ENCODE measurements at regions of chr7 and their contacts with region 1.

Region 1: GRCh38 chr7:2886900-2887299 is 42.8 kb upstream of the GNA12 start:
- DNase-seq: peak; percentile 44
- H3K4me3 Mint-ChIP-seq: no peak overlapping the region
- H3K27ac Mint-ChIP-seq: no peak overlapping the region
- H3K4me1 Mint-ChIP-seq: peaks cover 3% of the 10 kb centered on the region
- H3K27me3 Mint-ChIP-seq: peaks cover 1% of the 10 kb centered on the region

Region 2: DNA sequence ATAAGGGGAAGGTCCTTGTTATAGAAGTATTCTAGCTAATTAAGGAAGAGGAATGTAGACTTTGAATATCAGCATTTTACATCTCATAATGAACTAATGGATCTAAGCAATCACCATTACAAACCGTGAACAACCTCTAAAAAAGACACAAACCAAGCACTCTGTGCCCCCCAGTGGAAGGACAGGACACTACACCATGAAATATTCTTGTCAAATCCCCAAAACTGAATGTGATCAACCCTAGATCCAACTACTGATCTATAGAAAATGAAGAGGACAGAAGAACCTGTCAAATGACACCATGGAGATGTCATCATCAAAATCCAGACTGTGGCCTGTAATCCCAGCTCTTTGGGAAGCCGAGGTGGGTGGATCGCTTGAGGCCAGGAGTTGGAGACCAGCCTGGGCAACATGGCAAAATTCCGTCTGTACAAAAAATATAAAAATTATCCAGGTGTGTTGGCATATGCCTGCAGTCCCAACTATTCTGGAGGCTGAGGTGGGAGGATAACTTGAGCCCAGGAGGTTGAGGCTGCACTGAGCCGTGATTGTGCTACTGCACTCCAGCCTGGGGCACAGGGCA is 268.1 kb after region 1 on chr7:
- intact Hi-C with region 1: loop called (anchors 1 kb)
- DNase-seq: peak; percentile 48
- H3K4me3 Mint-ChIP-seq: no peak overlapping the region
- H3K27ac Mint-ChIP-seq: no peak overlapping the region
- H3K4me1 Mint-ChIP-seq: peaks cover 8% of the 10 kb centered on the region
- H3K27me3 Mint-ChIP-seq: peaks cover 11% of the 10 kb centered on the region

Region 3: DNA sequence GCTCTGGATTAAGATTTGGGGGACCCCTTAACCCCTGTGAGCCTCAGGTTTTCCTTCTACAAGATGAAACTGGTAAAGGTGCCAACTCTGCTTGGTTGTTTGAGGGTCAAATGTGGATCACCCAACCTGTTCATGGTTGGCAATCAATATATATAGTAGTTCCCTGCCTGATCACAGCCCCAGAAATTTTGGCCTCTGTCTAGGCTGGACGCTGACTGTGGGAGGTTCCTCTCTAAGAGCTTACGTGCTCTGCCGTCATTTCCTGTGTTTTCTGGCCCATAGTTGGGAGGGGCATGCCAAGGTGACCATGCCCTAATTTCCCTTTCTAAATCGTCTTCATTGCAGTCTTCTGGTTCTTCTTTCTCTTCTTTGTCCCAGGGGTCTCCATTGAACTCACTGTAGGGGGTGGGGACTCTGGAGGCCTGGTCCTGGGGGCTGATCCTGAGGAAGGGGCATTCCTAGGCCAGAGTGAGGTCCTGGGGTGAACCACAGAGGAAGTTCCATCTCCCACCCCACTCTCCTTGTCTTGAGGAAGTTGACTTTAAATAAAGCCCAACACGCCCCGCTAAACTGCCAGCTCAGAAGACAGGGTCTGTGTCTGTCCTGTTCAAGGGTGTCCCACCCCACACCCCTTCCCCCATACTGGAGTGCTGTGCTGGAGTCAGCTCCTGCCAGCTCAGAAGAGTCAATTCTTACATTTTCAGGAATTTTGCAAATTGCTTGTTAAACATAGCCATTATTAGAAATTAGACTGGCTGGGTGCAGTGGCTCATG is 315.2 kb after region 1 on chr7:
- intact Hi-C with region 1: loop called (anchors 1 kb)
- DNase-seq: no peak
- H3K4me3 Mint-ChIP-seq: no peak overlapping the region
- H3K27ac Mint-ChIP-seq: no peak overlapping the region
- H3K4me1 Mint-ChIP-seq: no peaks in the 10 kb centered on the region
- H3K27me3 Mint-ChIP-seq: no peaks in the 10 kb centered on the region